ENCODE measurements at regions of chr14 and their contacts with region 1.

Region 1: DNA sequence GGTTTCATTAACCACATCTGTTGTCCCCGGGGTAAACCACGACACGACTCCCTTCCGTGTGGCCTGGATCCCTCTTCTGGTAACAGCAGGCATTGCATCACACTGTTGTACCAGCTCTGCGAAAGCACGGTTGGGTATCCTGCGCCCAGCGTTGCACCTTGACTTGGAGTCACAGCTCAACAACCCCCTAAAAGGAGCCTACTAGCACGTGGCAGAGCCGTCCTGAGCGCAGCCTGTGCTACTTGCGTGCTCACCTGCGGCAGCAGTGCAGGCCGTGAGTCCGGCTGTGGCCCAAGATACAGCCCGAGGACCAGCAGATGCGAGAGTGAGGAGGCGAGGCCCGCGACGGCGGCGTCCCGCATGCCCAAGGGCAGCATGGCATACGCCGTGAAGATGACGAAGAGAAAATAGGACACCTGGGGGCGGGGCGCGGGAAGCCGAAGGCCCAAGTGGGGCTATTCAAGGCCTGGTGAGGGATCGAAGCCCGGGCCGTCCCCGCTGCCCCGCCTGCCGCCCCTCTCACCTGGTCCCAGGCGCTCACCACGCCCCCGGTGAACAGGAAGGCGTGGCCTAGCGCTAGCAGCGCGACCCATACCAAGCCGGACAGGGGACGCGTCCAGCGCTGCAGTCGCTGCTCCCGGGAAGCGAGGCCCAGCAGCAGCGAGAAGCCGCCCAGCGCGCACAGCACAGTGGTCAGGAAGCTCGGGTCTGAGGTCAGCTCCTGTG is 2.4 kb downstream of the ADCY4 start:
- DNase-seq: peak; percentile 60
- ATAC-seq: peak; percentile 88
- H3K4me3 ChIP-seq: peak overlapping the region; percentile 35; the same call in 1 of the 2 replicates
- H3K27ac ChIP-seq: no peak overlapping the region
- H3K4me1 ChIP-seq: peaks cover 18% of the 10 kb centered on the region
- H3K27me3 ChIP-seq: peaks cover 2 to 12% of the 10 kb centered on the region in 2 experiments; a peak in 3 of 4 replicates
- CTCF ChIP-seq: peak; percentile 80 to 86 (median 85)
- EP300 ChIP-seq: no peak
- POLR2A ChIP-seq: no peak
- RAD21 ChIP-seq: peak; percentile 73

Region 2: DNA sequence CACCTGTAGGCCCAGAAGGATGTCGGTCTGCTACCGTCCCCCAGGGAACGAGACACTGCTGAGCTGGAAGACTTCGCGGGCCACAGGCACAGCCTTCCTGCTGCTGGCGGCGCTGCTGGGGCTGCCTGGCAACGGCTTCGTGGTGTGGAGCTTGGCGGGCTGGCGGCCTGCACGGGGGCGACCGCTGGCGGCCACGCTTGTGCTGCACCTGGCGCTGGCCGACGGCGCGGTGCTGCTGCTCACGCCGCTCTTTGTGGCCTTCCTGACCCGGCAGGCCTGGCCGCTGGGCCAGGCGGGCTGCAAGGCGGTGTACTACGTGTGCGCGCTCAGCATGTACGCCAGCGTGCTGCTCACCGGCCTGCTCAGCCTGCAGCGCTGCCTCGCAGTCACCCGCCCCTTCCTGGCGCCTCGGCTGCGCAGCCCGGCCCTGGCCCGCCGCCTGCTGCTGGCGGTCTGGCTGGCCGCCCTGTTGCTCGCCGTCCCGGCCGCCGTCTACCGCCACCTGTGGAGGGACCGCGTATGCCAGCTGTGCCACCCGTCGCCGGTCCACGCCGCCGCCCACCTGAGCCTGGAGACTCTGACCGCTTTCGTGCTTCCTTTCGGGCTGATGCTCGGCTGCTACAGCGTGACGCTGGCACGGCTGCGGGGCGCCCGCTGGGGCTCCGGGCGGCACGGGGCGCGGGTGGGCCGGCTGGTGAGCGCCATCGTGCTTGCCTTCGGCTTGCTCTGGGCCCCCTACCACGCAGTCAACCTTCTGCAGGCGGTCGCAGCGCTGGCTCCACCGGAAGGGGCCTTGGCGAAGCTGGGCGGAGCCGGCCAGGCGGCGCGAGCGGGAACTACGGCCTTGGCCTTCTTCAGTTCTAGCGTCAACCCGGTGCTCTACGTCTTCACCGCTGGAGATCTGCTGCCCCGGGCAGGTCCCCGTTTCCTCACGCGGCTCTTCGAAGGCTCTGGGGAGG is 21.5 kb before region 1 on chr14 and contains the start of gene LTB4R:
- CTCF ChIA-PET with region 1: interaction called, 44 read pairs
- POLR2A ChIA-PET with region 1: interaction called, 4 read pairs
- RAD21 ChIA-PET with region 1: interaction called, 27 read pairs
- SMC1A ChIA-PET with region 1: interaction called, 9 read pairs
- in situ Hi-C with region 1: no loop called
- intact Hi-C with region 1: no loop called
- DNase-seq: no peak
- ATAC-seq: peak; percentile 75
- H3K4me3 ChIP-seq: peak within 1 kb of the TSS; percentile 47
- H3K27ac ChIP-seq: peak within 1 kb of the TSS; percentile 45; the same call in 1 of the 2 replicates
- H3K4me1 ChIP-seq: peaks cover 37% of the 10 kb centered on the region
- H3K27me3 ChIP-seq: no peaks in the 10 kb centered on the region
- CTCF ChIP-seq: peak; percentile 10 to 40 (median 29); a peak in 3 of 6 replicates
- EP300 ChIP-seq: no peak
- POLR2A ChIP-seq: peak; percentile 54; the same call in 1 of the 2 replicates
- RAD21 ChIP-seq: no peak
- polyA plus RNA-seq, gene LTB4R: 1.2 to 1.7 TPM

Region 3: DNA sequence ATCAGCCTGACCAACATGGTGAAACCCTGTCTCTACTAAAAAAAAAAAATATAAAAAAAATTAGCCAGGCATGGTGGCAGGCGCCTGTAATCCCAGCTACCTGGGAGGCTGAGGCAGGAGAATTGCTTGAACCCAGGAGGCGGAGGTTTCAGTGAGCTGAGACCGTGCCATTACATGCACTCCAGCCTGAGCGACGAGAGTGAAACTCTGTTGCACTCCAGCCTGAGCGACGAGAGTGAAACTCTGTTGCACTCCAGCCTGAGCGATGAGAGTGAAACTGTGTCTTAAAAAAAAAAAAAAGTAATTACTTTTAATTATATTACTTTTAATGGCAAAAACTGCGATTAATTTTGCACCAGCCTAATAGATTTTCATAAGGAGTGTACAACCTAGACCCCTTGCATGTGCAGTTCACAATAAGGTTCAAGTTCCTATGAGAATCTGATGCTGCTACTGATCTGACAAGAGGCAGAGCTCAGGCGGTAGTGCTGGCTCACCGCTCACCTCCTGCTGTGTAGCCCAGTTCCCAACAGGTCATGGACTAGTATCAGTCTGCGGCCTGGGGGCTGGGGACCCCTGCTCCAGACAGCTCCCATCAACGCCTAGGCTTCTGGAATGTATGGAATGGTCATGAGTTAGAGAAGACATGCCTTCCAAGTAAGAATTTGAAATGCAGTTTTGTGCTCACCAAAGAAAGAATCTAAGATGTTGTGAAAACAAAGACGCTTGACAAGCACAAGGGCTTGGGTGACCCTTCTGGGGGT is 11.0 kb before region 1 on chr14:
- CTCF ChIA-PET with region 1: interaction called, 19 read pairs
- POLR2A ChIA-PET with region 1: no interaction called
- RAD21 ChIA-PET with region 1: no interaction called
- SMC1A ChIA-PET with region 1: interaction called, 4 read pairs
- in situ Hi-C with region 1: no loop called
- intact Hi-C with region 1: no loop called
- DNase-seq: no peak
- ATAC-seq: no peak
- H3K4me3 ChIP-seq: no peak overlapping the region
- H3K27ac ChIP-seq: no peak overlapping the region
- H3K4me1 ChIP-seq: no peaks in the 10 kb centered on the region
- H3K27me3 ChIP-seq: no peaks in the 10 kb centered on the region
- CTCF ChIP-seq: no peak
- EP300 ChIP-seq: no peak
- POLR2A ChIP-seq: no peak
- RAD21 ChIP-seq: no peak

Region 4: DNA sequence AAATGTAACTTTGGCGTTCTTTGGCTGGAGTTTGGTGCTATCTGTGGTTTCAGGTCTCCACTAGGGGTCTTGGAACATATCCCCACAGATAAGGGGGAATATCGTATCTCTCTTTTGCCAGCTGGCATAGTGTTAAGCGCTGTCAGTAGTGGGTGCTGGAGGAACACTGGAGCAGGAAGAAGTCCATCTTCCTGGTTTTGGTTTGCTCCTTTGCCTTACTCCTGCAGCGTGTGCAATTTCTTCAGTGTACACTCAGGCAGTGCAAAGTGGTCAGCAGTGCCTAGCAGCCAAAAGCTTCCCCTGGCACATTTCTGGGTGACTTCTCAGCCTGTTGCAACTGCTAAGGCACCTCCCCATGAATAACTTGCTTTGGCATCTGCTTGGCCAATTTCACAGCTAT is 19.1 kb after region 1 on chr14:
- CTCF ChIA-PET with region 1: interaction called, 39 read pairs
- POLR2A ChIA-PET with region 1: no interaction called
- RAD21 ChIA-PET with region 1: interaction called, 7 read pairs
- SMC1A ChIA-PET with region 1: interaction called, 8 read pairs
- in situ Hi-C with region 1: no loop called
- intact Hi-C with region 1: no loop called
- DNase-seq: no peak
- ATAC-seq: no peak; the same call in 2 of the 3 replicates
- H3K4me3 ChIP-seq: no peak overlapping the region
- H3K27ac ChIP-seq: no peak overlapping the region
- H3K4me1 ChIP-seq: no peaks in the 10 kb centered on the region
- H3K27me3 ChIP-seq: peaks cover 1 to 4% of the 10 kb centered on the region in 2 experiments; a peak in 3 of 4 replicates
- CTCF ChIP-seq: no peak
- EP300 ChIP-seq: no peak
- POLR2A ChIP-seq: no peak
- RAD21 ChIP-seq: no peak

Region 5: GRCh38 chr14:24366721-24367513 is 34.5 kb after region 1 on chr14:
- CTCF ChIA-PET with region 1: interaction called, 37 read pairs
- POLR2A ChIA-PET with region 1: interaction called, 5 read pairs
- RAD21 ChIA-PET with region 1: interaction called, 11 read pairs
- SMC1A ChIA-PET with region 1: interaction called, 9 read pairs
- in situ Hi-C with region 1: no loop called
- intact Hi-C with region 1: loop called (anchors 5 kb)
- DNase-seq: peak; percentile 34
- ATAC-seq: peak; percentile 79
- H3K4me3 ChIP-seq: peak overlapping the region; percentile 53; the same call in 1 of the 2 replicates
- H3K27ac ChIP-seq: peak overlapping the region; percentile 48
- H3K4me1 ChIP-seq: peaks cover 16% of the 10 kb centered on the region
- H3K27me3 ChIP-seq: peaks cover 1 to 6% of the 10 kb centered on the region in 2 experiments
- CTCF ChIP-seq: no peak
- EP300 ChIP-seq: peak; percentile 29 to 31; a peak in 1 of 4 replicates
- POLR2A ChIP-seq: no peak
- RAD21 ChIP-seq: no peak

Region 6: DNA sequence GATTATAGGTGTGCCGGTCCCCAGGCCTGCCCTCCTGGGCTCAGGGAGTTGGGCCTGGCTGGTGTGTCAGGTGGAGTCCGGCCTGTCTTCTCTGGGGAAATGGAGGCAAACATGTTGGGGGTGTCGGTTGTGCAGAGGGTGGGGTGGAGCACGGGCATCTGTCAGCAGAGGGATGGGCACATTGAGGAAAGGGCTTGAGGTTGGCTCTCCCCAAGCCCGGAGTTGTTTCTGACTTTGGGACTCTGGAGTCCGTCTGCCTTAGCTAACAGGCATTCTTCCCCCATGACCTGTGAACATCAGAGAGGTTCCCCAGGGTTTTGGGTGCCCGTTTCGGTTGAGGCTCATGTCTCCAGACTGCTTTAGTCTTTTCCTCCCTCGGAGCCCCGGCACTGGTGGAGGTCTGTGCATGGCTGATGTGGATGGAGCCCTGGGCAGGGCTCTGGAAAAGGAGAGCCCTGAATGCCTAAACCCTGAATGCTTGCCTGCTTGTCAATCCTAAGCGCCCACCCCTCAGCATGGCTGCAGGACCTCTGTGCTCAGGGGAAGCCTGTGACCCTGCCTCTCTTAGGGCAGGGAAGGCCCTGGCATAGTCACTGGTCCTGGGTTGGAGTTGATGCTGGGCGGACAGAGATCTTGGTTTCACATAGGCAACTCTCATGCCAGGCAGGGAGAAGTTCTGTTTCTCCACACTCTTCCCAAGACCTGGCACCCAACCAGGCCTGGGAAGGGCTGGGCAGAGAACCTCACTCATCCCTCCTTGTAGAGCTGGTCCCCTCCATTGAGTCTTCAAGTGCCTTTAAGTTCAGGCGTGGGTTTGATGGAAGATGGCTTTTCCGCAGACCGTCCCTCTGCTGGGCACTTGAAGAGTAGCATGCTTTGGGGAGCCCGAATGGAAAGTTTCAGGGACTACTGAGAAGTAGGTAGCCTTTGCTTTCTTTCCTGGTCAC is 79.3 kb after region 1 on chr14:
- CTCF ChIA-PET with region 1: interaction called, 10 read pairs
- POLR2A ChIA-PET with region 1: no interaction called
- RAD21 ChIA-PET with region 1: interaction called, 7 read pairs
- SMC1A ChIA-PET with region 1: no interaction called
- in situ Hi-C with region 1: no loop called
- intact Hi-C with region 1: no loop called
- DNase-seq: no peak
- ATAC-seq: peak; percentile 87
- H3K4me3 ChIP-seq: no peak overlapping the region
- H3K27ac ChIP-seq: no peak overlapping the region
- H3K4me1 ChIP-seq: no peaks in the 10 kb centered on the region
- H3K27me3 ChIP-seq: peaks cover 1 to 5% of the 10 kb centered on the region in 2 experiments; a peak in 2 of 4 replicates
- CTCF ChIP-seq: peak; percentile 54 to 79 (median 58)
- EP300 ChIP-seq: no peak
- POLR2A ChIP-seq: no peak
- RAD21 ChIP-seq: peak; percentile 62

Region 7: DNA sequence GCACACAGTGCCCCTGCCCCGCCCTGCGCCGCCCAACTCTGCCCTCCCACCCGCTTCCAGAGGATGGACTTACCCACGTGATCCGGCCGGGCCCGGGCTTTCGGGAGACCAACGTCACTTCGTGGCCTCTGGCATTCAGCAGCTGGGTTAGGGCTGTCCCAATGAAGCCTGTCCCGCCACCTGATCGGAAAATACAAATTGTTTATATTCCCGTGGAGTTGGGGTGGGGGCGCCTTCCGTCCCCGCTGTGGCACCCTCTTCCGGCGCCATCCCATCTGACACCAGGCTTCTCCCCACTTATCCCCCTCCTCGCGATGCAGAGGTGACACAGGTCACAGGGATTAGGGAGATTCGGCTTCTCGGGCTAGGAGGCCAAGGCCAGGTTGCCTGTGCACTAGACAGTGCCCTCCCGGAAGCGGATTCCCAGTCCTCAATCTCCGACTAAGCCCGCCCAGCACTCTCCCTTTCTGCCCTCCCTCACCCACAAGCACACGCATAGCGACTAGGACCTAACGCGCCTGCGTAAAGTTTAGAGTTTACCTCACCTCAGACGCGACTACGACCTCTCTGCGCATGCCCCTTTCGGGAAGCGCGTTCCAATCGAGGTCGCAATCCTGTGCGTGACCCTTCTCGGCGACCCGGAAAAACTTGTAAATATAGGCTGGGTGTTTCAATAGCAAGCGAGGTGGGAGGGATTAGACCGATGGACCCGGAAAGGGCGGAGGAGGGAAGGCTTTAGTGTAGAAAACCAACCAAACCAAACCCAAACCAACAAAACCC is 110.0 kb after region 1 on chr14 and contains the start of gene SDR39U1:
- CTCF ChIA-PET with region 1: interaction called, 220 read pairs
- POLR2A ChIA-PET with region 1: interaction called, 4 read pairs
- RAD21 ChIA-PET with region 1: interaction called, 31 read pairs
- SMC1A ChIA-PET with region 1: interaction called, 73 read pairs
- in situ Hi-C with region 1: no loop called
- intact Hi-C with region 1: no loop called
- DNase-seq: peak; percentile 99
- ATAC-seq: peak; percentile 93
- H3K4me3 ChIP-seq: peak within 1 kb of the TSS; percentile 93
- H3K27ac ChIP-seq: peak within 1 kb of the TSS; percentile 96
- H3K4me1 ChIP-seq: peaks cover 6% of the 10 kb centered on the region
- H3K27me3 ChIP-seq: no peaks in the 10 kb centered on the region
- CTCF ChIP-seq: no peak
- EP300 ChIP-seq: no peak
- POLR2A ChIP-seq: peak; percentile 90
- RAD21 ChIP-seq: no peak
- polyA plus RNA-seq, gene SDR39U1: 14.0 to 26.4 TPM

Measured in GM12878 (cell line).